PC-9 (cell line): ENCODE measurements at regions of chr2 and their contacts with region 1.

Region 1: DNA sequence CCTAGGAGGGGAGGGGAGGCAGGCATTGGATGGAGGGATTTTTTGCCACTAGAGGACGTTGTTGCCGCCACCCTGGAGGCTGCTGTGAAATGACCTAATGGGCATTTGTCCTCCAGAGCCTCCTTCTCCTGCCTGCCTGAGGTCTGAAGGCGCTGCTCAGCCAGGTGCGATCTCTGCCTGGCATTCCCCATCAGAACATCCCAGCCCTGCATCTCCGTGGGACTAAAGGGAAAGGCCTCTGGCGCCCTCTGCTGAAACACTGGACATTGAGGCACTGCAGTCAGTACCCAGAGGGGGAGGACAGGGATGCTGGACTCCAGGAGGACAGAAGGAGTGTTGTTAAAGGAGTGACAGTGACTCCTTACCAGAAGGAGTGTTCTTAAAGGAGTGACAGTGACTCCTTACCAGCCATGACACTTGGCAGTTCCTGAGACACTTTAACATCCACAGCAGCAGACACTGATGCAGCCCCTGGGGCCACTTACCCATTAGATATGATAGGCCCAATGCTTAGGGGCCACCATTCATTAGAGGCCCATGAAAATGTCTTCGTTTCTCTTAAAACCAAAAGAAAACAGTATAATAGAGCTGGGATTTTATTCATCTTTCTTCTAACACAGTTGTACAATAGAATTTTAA is 17.0 kb downstream of the THNSL2 start:
- DNase-seq: peak in 1 of 2 experiments; percentile 47
- H3K4me3 ChIP-seq: no peak overlapping the region
- H3K27ac ChIP-seq: no peak overlapping the region
- H3K4me1 ChIP-seq: no peaks in the 10 kb centered on the region
- H3K27me3 ChIP-seq: no peaks in the 10 kb centered on the region
- CTCF ChIP-seq: peak; percentile 65

Region 2: GRCh38 chr2:88458633-88459032 is 271.5 kb after region 1 on chr2:
- CTCF ChIA-PET with region 1: no interaction called
- POLR2A ChIA-PET with region 1: no interaction called
- intact Hi-C with region 1: loop called (anchors 5 kb)
- DNase-seq: no peak
- H3K4me3 ChIP-seq: no peak overlapping the region
- H3K27ac ChIP-seq: no peak overlapping the region
- H3K4me1 ChIP-seq: no peaks in the 10 kb centered on the region
- H3K27me3 ChIP-seq: peaks cover 20% of the 10 kb centered on the region
- CTCF ChIP-seq: no peak

Region 3: GRCh38 chr2:88554189-88554588 is 367.0 kb after region 1 on chr2:
- CTCF ChIA-PET with region 1: no interaction called
- POLR2A ChIA-PET with region 1: no interaction called
- intact Hi-C with region 1: loop called (anchors 2 kb)
- DNase-seq: peak in 1 of 2 experiments; percentile 7
- H3K4me3 ChIP-seq: no peak overlapping the region
- H3K27ac ChIP-seq: no peak overlapping the region
- H3K4me1 ChIP-seq: no peaks in the 10 kb centered on the region
- H3K27me3 ChIP-seq: no peaks in the 10 kb centered on the region
- CTCF ChIP-seq: peak; percentile 55

Region 4: DNA sequence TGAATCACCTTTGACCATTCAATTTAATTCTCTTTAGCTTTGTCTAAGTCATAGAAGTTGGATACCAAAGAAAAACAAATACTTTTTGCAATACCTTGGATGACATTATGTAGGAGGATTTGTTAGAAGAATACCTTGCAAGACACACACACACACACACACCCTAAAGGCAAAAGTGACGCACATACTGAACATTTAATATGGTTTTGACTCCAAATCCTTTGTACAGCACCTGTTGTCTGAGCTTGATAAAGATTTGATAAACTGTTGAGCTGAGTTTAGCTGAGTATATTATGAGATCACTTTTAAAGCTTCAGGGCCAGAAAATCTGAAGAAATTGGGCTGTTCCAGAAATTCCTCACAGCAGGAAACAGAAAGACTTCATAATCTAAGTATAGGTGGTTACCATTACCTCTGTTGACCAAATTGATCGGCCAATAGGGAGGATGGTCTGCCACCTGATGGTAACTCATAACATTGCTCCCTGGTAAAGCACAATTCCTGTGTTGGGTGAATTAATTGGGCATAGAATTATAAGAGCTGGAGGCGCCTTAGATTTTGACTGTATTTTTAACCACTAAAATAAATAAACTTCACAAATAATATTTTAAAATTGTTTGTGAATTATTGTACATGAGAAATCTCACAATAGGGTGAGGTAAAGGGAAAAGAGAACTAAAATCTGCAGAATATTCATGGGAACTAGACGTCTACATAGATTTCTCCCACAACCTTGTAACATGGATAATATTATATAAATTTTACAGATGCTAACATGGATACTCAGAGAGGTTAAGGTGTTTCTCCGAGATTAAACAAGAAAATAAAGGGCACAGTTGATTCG is 482.4 kb after region 1 on chr2:
- CTCF ChIA-PET with region 1: no interaction called
- POLR2A ChIA-PET with region 1: no interaction called
- intact Hi-C with region 1: loop called (anchors 10 kb)
- DNase-seq: peak; percentile 26 to 57
- H3K4me3 ChIP-seq: no peak overlapping the region
- H3K27ac ChIP-seq: no peak overlapping the region
- H3K4me1 ChIP-seq: no peaks in the 10 kb centered on the region
- H3K27me3 ChIP-seq: no peaks in the 10 kb centered on the region
- CTCF ChIP-seq: peak; percentile 81